ENCODE measurements at regions of chr1 and their contacts with region 1.

Region 1: GRCh38 chr1:24930204-24931145 is at the start of gene RUNX3:
- DNase-seq: peak in 3 of 10 donors; percentile 32 to 90 (median 73)

Region 2: GRCh38 chr1:25037174-25038074 is 106.9 kb after region 1 on chr1:
- intact Hi-C with region 1: loop called (anchors 5 kb)
- DNase-seq: peak in 2 of 10 donors; percentile 32 to 61

Region 3: DNA sequence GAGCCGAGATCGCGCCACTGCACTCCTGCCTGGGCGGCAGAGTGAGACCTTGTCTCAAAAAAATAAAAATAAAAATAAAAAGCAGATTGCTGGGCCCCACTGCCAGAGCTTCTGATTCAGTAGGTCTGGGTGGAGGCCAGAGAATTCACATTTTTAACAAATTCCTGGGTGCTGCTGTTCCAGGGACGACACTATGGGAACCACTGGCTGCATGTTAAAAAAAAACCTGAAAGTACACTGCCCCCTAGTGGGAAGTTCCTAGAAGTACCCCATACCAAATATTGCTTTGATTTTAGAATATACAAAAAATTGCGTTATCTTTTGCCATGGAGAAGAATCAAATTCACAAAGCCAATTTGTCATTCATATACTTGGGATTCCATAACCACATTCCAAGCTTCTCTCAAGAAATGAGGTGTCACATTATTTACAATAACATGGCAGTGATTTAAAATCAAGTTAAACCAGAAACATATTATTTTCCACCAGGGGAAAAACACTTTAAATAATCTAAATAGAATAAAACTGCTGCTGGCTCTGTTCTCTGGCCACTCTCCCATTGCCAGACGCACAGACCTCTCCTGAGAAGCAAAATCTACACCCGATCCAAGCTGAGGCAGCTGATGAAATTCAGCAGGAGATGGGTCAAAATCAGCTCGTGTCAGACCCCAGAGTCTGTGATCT is 274.5 kb after region 1 on chr1:
- intact Hi-C with region 1: loop called (anchors 1 kb)
- DNase-seq: peak in 1 of 10 donors; percentile 15

Measured in posterior cingulate gyrus (tissue), 11 donors.